IMR-90 (cell line): ENCODE measurements at regions of chr12 and their contacts with region 1.

Region 1: GRCh38 chr12:70272510-70272909 is 29.3 kb downstream of the CNOT2 start:
- DNase-seq: no peak
- ATAC-seq: no peak
- H3K4me3 ChIP-seq: no peak overlapping the region
- H3K27ac ChIP-seq: no peak overlapping the region
- H3K4me1 ChIP-seq: no peaks in the 10 kb centered on the region
- H3K27me3 ChIP-seq: no peaks in the 10 kb centered on the region
- CTCF ChIP-seq: no peak
- POLR2A ChIP-seq: no peak
- RAD21 ChIP-seq: no peak

Region 2: DNA sequence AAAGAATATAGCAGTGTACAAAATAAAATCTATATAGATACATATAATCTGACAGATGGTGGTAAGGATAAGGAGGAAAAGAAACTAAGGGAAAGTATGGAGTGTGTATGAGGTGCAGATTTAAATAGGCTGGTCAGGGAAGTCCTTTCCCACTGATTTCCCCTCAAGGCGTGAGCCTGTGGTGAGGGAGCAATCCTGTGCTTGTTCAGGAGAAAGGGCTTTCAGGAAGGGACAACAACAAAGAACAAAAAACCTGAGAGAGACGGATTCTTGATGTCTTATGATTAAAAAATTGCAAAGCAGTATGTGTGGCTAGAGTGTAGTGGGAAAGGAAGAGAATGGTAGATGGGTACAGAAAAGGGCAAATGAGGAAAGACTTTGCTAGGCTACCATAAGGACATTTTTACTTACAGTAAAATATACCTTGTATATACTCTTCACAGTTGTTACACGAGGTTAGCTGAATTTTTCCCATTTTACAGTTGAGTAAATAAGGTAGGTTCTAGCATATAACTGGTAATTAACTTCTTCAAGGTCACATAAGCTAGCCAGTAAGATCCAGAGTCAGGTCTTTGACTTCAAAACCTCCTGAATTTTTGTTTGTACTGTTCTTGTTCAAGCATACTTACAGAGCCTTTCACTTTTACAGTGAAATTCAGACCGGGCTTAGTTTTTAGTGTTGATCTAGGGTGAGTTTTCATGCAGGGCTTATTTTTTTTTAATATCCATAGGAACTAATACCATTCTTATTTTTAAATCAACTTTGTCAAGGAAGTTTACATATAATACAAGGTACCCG is 13.7 kb before region 1 on chr12:
- CTCF ChIA-PET with region 1: no interaction called
- POLR2A ChIA-PET with region 1: no interaction called
- dilution Hi-C with region 1: no loop called
- in situ Hi-C with region 1: no loop called
- intact Hi-C with region 1: loop called (anchors 2 kb)
- DNase-seq: no peak
- ATAC-seq: no peak
- H3K4me3 ChIP-seq: no peak overlapping the region
- H3K27ac ChIP-seq: no peak overlapping the region
- H3K4me1 ChIP-seq: peaks cover 3% of the 10 kb centered on the region
- H3K27me3 ChIP-seq: no peaks in the 10 kb centered on the region
- CTCF ChIP-seq: no peak
- POLR2A ChIP-seq: no peak
- RAD21 ChIP-seq: no peak

Region 3: DNA sequence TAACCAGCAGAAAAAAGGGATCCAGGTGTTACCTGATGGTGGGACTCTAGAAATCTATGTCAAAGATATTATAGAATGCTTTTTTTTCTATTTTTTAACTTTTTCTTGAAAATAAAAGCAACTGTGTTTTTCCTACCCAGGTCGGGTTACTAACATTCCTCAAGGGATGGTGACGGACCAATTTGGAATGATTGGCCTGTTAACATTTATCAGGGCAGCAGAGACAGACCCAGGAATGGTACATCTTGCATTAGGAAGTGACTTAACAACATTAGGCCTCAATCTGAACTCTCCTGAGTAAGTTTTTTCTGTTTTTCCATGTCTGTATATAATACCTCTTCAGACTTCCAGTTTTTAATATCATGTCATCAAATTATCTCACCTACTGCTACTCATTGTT is 66.0 kb after region 1 on chr12:
- CTCF ChIA-PET with region 1: no interaction called
- POLR2A ChIA-PET with region 1: no interaction called
- dilution Hi-C with region 1: no loop called
- in situ Hi-C with region 1: no loop called
- intact Hi-C with region 1: no loop called
- DNase-seq: peak; percentile 23
- ATAC-seq: no peak
- H3K4me3 ChIP-seq: no peak overlapping the region
- H3K27ac ChIP-seq: no peak overlapping the region
- H3K4me1 ChIP-seq: no peaks in the 10 kb centered on the region
- H3K27me3 ChIP-seq: no peaks in the 10 kb centered on the region
- CTCF ChIP-seq: no peak
- POLR2A ChIP-seq: no peak
- RAD21 ChIP-seq: no peak

Region 4: DNA sequence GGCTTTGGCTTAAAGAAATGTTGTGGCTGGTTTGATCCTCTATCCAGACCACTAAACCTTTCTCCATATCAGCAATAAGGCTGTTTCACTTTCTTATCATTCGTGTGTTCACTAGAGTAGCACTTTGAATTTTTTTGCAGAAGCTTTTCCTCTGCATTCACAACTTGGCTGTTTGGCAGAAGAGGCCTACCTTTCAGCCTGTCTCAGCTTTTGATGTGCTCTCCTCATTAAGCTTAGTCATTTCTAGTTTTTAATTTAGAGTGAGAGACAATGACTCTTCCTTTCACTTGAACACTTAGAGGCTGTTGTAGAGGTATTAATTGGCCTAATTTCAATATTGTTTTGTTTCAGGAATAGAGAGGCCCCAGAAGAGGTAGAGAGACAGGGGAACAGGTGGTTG is 107.3 kb after region 1 on chr12:
- CTCF ChIA-PET with region 1: no interaction called
- POLR2A ChIA-PET with region 1: no interaction called
- dilution Hi-C with region 1: no loop called
- in situ Hi-C with region 1: no loop called
- intact Hi-C with region 1: no loop called
- DNase-seq: no peak
- ATAC-seq: no peak
- H3K4me3 ChIP-seq: no peak overlapping the region
- H3K27ac ChIP-seq: no peak overlapping the region
- H3K4me1 ChIP-seq: no peaks in the 10 kb centered on the region
- H3K27me3 ChIP-seq: no peaks in the 10 kb centered on the region
- CTCF ChIP-seq: no peak
- POLR2A ChIP-seq: no peak
- RAD21 ChIP-seq: no peak